ENCODE measurements at regions of chr1 and their contacts with region 1.

Region 1: GRCh38 chr1:205812878-205813754 is at the start of gene SLC41A1:
- DNase-seq: peak; percentile 94 to 96 (median 94)
- ATAC-seq: peak; percentile 86 to 93 (median 88)
- H3K4me3 ChIP-seq: peak within 1 kb of the TSS; percentile 63 to 95 (median 80)
- H3K27ac ChIP-seq: peak within 1 kb of the TSS; percentile 81 to 97 (median 92)
- H3K4me1 ChIP-seq: peaks cover 0 to 50% (median 32%) of the 10 kb centered on the region in 12 donors
- H3K27me3 ChIP-seq: no peaks in the 10 kb centered on the region
- CTCF ChIP-seq: peak in 1 of 12 donors; percentile 4
- POLR2A ChIP-seq: peak; percentile 56 to 92
- total RNA-seq, gene SLC41A1: 247 to 442 (median 333) TPM

Region 2: GRCh38 chr1:205750138-205751035 is 62.7 kb before region 1 on chr1 and contains the start of gene NUCKS1:
- intact Hi-C with region 1: loop called in 4 of 10 experiments (anchors 1 to 5 kb)
- DNase-seq: peak; percentile 98 to 100 (median 99)
- ATAC-seq: peak; percentile 87 to 93 (median 92)
- H3K4me3 ChIP-seq: peak within 1 kb of the TSS; percentile 49 to 91 (median 79)
- H3K27ac ChIP-seq: peak within 1 kb of the TSS; percentile 91 to 99 (median 96)
- H3K4me1 ChIP-seq: peaks cover 8 to 35% (median 27%) of the 10 kb centered on the region in 12 donors
- H3K27me3 ChIP-seq: no peaks in the 10 kb centered on the region
- CTCF ChIP-seq: peak in 8 of 12 donors; percentile 32 to 75 (median 41)
- POLR2A ChIP-seq: peak in 1 of 2 donors; percentile 58
- total RNA-seq, gene NUCKS1: 83.8 to 240 (median 198) TPM

Region 3: DNA sequence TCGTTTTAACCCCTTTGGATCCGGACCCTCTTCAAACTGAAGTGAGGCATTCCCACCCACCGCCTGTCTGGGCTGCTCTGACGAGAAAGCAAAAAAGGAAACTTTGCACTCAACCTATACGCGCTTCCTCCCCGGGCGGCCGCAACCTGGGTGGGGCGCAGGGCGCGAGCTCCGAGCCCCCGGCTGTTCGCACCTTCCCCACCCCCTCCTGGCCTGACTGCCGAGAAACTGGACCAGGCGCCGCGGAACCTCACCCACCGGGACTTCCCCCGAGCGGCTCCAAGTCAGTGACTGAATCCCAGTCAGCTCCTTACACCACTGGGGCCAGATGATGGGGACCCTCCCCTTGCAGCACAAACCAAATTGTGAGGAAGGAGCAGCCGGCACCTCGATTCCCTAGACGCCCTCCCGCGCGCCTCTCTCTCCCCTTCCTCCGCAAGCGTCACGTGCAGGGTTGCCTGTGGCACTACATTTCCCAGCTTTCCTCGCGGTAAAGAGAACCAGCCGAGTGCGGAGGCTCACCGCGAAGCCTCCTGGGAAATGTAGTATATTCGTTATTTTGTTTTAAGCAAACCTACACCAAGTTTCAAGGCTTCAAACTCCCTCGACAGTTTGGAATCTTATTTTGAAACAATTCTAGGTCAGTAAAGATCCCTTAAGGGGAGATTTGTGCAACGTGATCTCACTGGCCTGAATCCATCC is 38.0 kb before region 1 on chr1 and contains the start of gene RAB29:
- intact Hi-C with region 1: loop called in 1 of 10 experiments (anchors 1 kb)
- DNase-seq: peak; percentile 84 to 89 (median 87)
- ATAC-seq: peak; percentile 93 to 97 (median 96)
- H3K4me3 ChIP-seq: peak within 1 kb of the TSS; percentile 61 to 84 (median 77)
- H3K27ac ChIP-seq: peak within 1 kb of the TSS in 11 of 12 donors; percentile 35 to 89 (median 67)
- H3K4me1 ChIP-seq: peaks cover 0 to 36% (median 14%) of the 10 kb centered on the region in 12 donors
- H3K27me3 ChIP-seq: no peaks in the 10 kb centered on the region
- CTCF ChIP-seq: no peak
- POLR2A ChIP-seq: peak in 1 of 2 donors; percentile 65
- total RNA-seq, gene RAB29: 13.8 to 26.0 (median 16.6) TPM

Region 4: GRCh38 chr1:205849619-205850355 is 36.7 kb after region 1 on chr1 and contains the start of gene PM20D1:
- intact Hi-C with region 1: loop called in 2 of 10 experiments (anchors 2 to 5 kb)
- DNase-seq: peak; percentile 76 to 92 (median 86)
- ATAC-seq: peak; percentile 97 to 100 (median 99)
- H3K4me3 ChIP-seq: peak within 1 kb of the TSS; percentile 21 to 77 (median 54)
- H3K27ac ChIP-seq: peak within 1 kb of the TSS in 3 of 12 donors; percentile 17 to 29 (median 18)
- H3K4me1 ChIP-seq: peaks cover 0 to 11% (median 1%) of the 10 kb centered on the region in 12 donors
- H3K27me3 ChIP-seq: no peaks in the 10 kb centered on the region
- CTCF ChIP-seq: no peak
- POLR2A ChIP-seq: peak in 1 of 2 donors; percentile 64
- total RNA-seq, gene PM20D1: 0.45 to 1.4 (median 0.78) TPM in 8 of 9 donors, not detected in the other

Region 5: GRCh38 chr1:205907794-205908193 is 94.7 kb after region 1 on chr1:
- intact Hi-C with region 1: loop called in 5 of 10 experiments (anchors 5 kb)
- DNase-seq: no peak
- ATAC-seq: peak in 2 of 4 donors; percentile 60 to 68
- H3K4me3 ChIP-seq: no peak overlapping the region
- H3K27ac ChIP-seq: no peak overlapping the region
- H3K4me1 ChIP-seq: peaks cover 0 to 4% (median 0%) of the 10 kb centered on the region in 12 donors
- H3K27me3 ChIP-seq: no peaks in the 10 kb centered on the region
- CTCF ChIP-seq: peak in 11 of 12 donors; percentile 31 to 67 (median 51)
- POLR2A ChIP-seq: no peak

Region 6: GRCh38 chr1:205913451-205914155 is 100.5 kb after region 1 on chr1:
- intact Hi-C with region 1: loop called in 8 of 10 experiments (anchors 2 to 5 kb)
- DNase-seq: peak; percentile 69 to 91 (median 80)
- ATAC-seq: peak; percentile 49 to 80 (median 62)
- H3K4me3 ChIP-seq: no peak overlapping the region
- H3K27ac ChIP-seq: peak overlapping the region; percentile 68 to 94 (median 86)
- H3K4me1 ChIP-seq: peaks cover 3 to 60% (median 31%) of the 10 kb centered on the region in 12 donors
- H3K27me3 ChIP-seq: no peaks in the 10 kb centered on the region
- CTCF ChIP-seq: no peak
- POLR2A ChIP-seq: no peak

Region 7: GRCh38 chr1:205919026-205919746 is 106.1 kb after region 1 on chr1:
- intact Hi-C with region 1: loop called in 7 of 10 experiments (anchors 2 to 5 kb)
- DNase-seq: peak in 4 of 5 donors; percentile 82 to 86 (median 84)
- ATAC-seq: peak; percentile 47 to 73 (median 56)
- H3K4me3 ChIP-seq: peak overlapping the region in 6 of 12 donors; percentile 0 to 44 (median 36)
- H3K27ac ChIP-seq: peak overlapping the region; percentile 68 to 94 (median 86)
- H3K4me1 ChIP-seq: peaks cover 0 to 66% (median 32%) of the 10 kb centered on the region in 12 donors
- H3K27me3 ChIP-seq: no peaks in the 10 kb centered on the region
- CTCF ChIP-seq: peak; percentile 79 to 96 (median 89)
- POLR2A ChIP-seq: no peak